ENCODE measurements at regions of chr9 and their contacts with region 1.

Region 1: DNA sequence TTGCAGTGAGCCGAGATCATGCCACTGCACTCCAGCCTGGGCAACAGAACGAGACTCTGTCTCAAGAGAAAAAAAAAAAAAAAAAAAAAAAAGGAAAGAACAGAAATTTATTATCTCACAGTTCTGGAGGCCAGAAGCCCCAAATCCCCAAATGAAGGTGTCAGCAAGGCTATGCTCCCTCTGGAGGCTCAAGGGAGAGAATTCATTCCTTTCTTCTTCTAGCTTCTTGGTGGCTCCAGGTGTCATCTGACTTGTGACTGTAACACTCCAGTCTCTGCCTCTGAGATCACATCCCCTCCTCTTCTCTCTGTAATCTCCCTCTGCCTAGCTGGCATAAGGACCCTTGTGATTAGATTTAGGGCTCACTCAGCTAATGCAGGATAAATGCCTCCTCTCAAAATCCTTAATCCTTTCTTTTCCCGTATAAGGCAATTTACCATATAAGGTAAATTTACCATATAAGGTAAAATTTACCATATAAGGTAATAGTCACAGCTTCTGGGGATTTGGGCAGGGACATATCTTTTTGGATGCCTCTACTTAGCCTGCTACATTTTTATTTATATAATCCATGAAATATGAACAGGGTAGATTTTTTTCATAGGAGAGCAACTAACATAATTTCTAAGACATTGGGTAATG is 317.9 kb upstream of the PUM3 start:
- DNase-seq: no peak
- H3K4me3 ChIP-seq: no peak overlapping the region
- H3K4me3 Mint-ChIP-seq: no peak overlapping the region
- H3K27ac Mint-ChIP-seq: no peak overlapping the region
- H3K4me1 ChIP-seq: no peaks in the 10 kb centered on the region
- H3K4me1 Mint-ChIP-seq: no peaks in the 10 kb centered on the region
- H3K27me3 ChIP-seq: no peaks in the 10 kb centered on the region
- H3K27me3 Mint-ChIP-seq: peaks cover 7% of the 10 kb centered on the region
- CTCF ChIP-seq: no peak

Region 2: DNA sequence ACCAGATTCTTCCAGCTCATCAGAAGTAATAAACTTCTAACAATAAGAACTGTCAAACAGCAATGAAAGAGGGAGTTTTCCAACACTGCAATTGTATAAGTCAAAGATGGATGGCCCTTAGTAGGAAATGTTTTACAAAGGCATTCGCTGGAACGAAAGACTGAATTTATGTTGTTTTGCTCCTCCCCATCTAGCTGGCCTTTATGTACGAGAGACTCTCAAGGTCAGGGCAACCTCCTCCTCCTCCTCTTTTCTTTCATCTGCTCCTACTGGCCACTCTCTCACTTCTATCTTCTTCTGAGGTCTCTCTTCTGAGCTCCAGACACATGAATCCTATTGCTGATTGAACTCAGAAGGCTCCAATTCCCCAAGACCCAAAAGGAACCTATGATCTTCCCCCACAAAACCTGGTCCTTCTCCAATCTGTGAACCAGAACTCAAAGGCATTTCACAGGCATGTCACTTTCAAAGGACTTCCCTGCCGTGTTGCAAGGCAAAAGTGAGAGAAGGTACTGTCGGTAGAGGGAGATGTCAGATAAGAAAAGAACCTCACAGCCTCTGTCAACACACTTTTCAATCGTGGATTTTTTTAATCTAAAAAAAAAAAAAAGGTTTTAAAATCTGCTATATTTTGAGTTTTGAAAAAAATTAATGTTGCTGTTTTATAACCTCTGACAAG is 289.4 kb before region 1 on chr9:
- CTCF ChIA-PET with region 1: no interaction called
- POLR2A ChIA-PET with region 1: no interaction called
- intact Hi-C with region 1: loop called (anchors 5 kb)
- DNase-seq: peak in 1 of 2 experiments; percentile 36
- H3K4me3 ChIP-seq: no peak overlapping the region
- H3K4me3 Mint-ChIP-seq: no peak overlapping the region
- H3K27ac Mint-ChIP-seq: no peak overlapping the region
- H3K4me1 ChIP-seq: no peaks in the 10 kb centered on the region
- H3K4me1 Mint-ChIP-seq: peaks cover 6% of the 10 kb centered on the region
- H3K27me3 ChIP-seq: no peaks in the 10 kb centered on the region
- H3K27me3 Mint-ChIP-seq: peaks cover 25% of the 10 kb centered on the region
- CTCF ChIP-seq: peak in 1 of 2 experiments; percentile 29

Region 3: GRCh38 chr9:3331817-3332216 is 170.0 kb after region 1 on chr9:
- CTCF ChIA-PET with region 1: no interaction called
- POLR2A ChIA-PET with region 1: no interaction called
- intact Hi-C with region 1: no loop called
- DNase-seq: peak; percentile 16 to 26
- H3K4me3 ChIP-seq: no peak overlapping the region
- H3K4me3 Mint-ChIP-seq: no peak overlapping the region
- H3K27ac Mint-ChIP-seq: no peak overlapping the region
- H3K4me1 ChIP-seq: no peaks in the 10 kb centered on the region
- H3K4me1 Mint-ChIP-seq: no peaks in the 10 kb centered on the region
- H3K27me3 ChIP-seq: no peaks in the 10 kb centered on the region
- H3K27me3 Mint-ChIP-seq: no peaks in the 10 kb centered on the region
- CTCF ChIP-seq: peak in 1 of 2 experiments; percentile 41